Panc1 (cell line): ENCODE measurements at regions of chr22 and their contacts with region 1.

Region 1: GRCh38 chr22:33142282-33143055 is 84.3 kb upstream of the SYN3 start:
- DNase-seq: no peak
- ATAC-seq: no peak
- H3K4me3 ChIP-seq: no peak overlapping the region
- H3K27ac ChIP-seq: no peak overlapping the region
- H3K4me1 ChIP-seq: no peaks in the 10 kb centered on the region
- H3K27me3 ChIP-seq: no peaks in the 10 kb centered on the region
- CTCF ChIP-seq: no peak

Region 2: GRCh38 chr22:33063611-33064010 is 78.9 kb before region 1 on chr22:
- CTCF ChIA-PET with region 1: no interaction called
- POLR2A ChIA-PET with region 1: no interaction called
- in situ Hi-C with region 1: no loop called
- intact Hi-C with region 1: no loop called
- DNase-seq: no peak
- ATAC-seq: no peak
- H3K4me3 ChIP-seq: no peak overlapping the region
- H3K27ac ChIP-seq: no peak overlapping the region
- H3K4me1 ChIP-seq: no peaks in the 10 kb centered on the region
- H3K27me3 ChIP-seq: no peaks in the 10 kb centered on the region
- CTCF ChIP-seq: no peak

Region 3: GRCh38 chr22:33130473-33130872 is 12.0 kb before region 1 on chr22:
- CTCF ChIA-PET with region 1: no interaction called
- POLR2A ChIA-PET with region 1: interaction called, 12 read pairs
- in situ Hi-C with region 1: no loop called
- intact Hi-C with region 1: no loop called
- DNase-seq: no peak
- ATAC-seq: no peak
- H3K4me3 ChIP-seq: no peak overlapping the region
- H3K27ac ChIP-seq: no peak overlapping the region
- H3K4me1 ChIP-seq: no peaks in the 10 kb centered on the region
- H3K27me3 ChIP-seq: no peaks in the 10 kb centered on the region
- CTCF ChIP-seq: no peak

Region 4: DNA sequence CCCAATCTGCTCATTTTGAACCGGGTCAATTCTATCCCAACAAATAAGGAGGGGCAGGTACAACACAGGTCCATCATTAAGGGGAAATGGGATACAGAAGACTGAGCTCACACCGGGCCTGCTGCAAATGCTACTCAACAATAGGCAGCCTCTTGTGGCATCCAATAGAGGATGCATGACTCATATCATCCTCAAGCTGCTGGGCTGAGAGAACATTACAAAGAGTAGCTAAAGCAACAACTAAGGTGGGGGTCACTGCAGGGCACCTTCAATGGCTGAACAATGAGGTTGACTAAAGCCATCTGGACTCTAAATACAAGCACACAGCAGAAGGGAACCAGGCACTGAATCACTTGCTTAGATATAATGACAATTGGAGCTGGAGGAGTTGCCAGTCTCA is 45.9 kb after region 1 on chr22:
- CTCF ChIA-PET with region 1: no interaction called
- POLR2A ChIA-PET with region 1: no interaction called
- in situ Hi-C with region 1: no loop called
- intact Hi-C with region 1: no loop called
- DNase-seq: no peak
- ATAC-seq: no peak
- H3K4me3 ChIP-seq: no peak overlapping the region
- H3K27ac ChIP-seq: no peak overlapping the region
- H3K4me1 ChIP-seq: no peaks in the 10 kb centered on the region
- H3K27me3 ChIP-seq: no peaks in the 10 kb centered on the region
- CTCF ChIP-seq: no peak